B cell (primary cell): ENCODE measurements at regions of chr9 and their contacts with region 1.

Region 1: GRCh38 chr9:93682232-93682968 is 106.0 kb downstream of the PHF2 start:
- DNase-seq: peak; percentile 59
- ATAC-seq: peak; percentile 41
- H3K4me3 ChIP-seq: no peak overlapping the region
- H3K4me3 Mint-ChIP-seq: no peak overlapping the region
- H3K27ac ChIP-seq: no peak overlapping the region
- H3K27ac Mint-ChIP-seq: no peak overlapping the region
- H3K4me1 ChIP-seq: no peaks in the 10 kb centered on the region
- H3K4me1 Mint-ChIP-seq: no peaks in the 10 kb centered on the region
- H3K27me3 ChIP-seq: peaks cover 0 to 8% (median 0%) of the 10 kb centered on the region in 4 experiments
- H3K27me3 Mint-ChIP-seq: peaks cover 16% of the 10 kb centered on the region
- CTCF ChIP-seq: peak; percentile 80

Region 2: GRCh38 chr9:93950619-93951601 is 268.5 kb after region 1 on chr9:
- CTCF ChIA-PET with region 1: no interaction called
- POLR2A ChIA-PET with region 1: no interaction called
- intact Hi-C with region 1: loop called (anchors 5 kb)
- DNase-seq: peak; percentile 50
- ATAC-seq: no peak
- H3K4me3 ChIP-seq: peak overlapping the region; percentile 11 to 61 (median 45)
- H3K4me3 Mint-ChIP-seq: peak overlapping the region; percentile 76
- H3K27ac ChIP-seq: no peak overlapping the region
- H3K27ac Mint-ChIP-seq: no peak overlapping the region
- H3K4me1 ChIP-seq: peaks cover 62 to 76% of the 10 kb centered on the region in 2 donors
- H3K4me1 Mint-ChIP-seq: peaks cover 54% of the 10 kb centered on the region
- H3K27me3 ChIP-seq: peaks cover 0 to 92% (median 75%) of the 10 kb centered on the region in 4 experiments
- H3K27me3 Mint-ChIP-seq: peaks cover 65% of the 10 kb centered on the region
- CTCF ChIP-seq: no peak